Astrocyte of the cerebellum (primary cell): ENCODE measurements at regions of chr1 and their contacts with region 1.

Region 1: DNA sequence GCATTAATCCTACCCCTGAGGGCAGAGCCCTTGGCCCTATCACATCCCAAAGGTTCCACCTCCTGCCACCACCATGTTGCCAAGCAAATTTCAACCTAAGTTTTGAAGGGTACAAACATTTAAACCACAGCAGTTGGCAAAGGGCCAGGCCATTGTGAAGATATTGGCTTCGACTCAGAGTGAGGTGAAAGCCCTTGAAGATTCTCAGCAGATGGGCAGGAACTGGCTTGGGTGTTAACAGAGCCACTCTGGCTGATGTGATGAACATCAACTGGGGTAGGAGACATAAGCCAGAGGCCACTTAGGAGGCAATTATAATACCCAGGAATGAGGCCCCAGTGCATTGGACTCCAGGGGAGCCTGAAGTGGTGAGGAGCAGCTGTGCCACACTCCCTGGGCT is 207.7 kb upstream of the KAZN start:
- DNase-seq: no peak
- H3K4me3 ChIP-seq: no peak overlapping the region
- CTCF ChIP-seq: no peak

Region 2: GRCh38 chr1:14205066-14205465 is 185.8 kb before region 1 on chr1:
- in situ Hi-C with region 1: no loop called
- DNase-seq: no peak
- H3K4me3 ChIP-seq: no peak overlapping the region
- CTCF ChIP-seq: no peak

Region 3: DNA sequence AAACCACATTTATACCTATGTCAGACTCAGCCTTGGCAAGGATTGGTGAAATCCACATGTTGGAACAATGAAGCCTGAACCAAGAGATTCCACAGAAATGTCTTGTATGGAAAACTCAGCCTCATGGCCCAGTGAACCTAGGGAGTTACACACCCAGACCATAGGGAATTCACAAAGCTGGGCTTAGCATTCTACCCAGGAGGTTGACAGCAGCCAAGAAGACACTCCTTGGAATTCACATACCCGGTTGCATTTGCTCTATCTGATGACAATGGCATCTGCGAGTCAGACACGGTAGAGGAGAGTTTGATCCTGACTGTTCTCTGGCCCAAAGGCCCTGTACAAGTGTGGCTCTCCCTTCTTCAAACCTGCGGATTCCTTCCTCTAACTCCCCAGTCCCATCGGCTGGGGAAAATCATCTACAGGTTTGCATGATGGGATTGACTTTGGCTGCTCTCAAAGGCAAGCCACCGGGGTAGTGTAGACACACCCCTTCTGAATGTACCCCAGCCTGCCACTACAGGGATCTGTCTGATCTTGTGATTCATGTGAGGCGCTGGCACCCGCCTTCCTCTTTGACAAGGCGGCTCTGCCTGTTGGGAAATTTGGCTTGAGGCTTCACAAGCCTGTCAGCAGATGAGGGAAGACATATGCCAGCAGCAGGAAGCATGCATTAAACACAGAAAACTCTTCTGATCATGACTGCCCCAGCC is 89.7 kb before region 1 on chr1:
- in situ Hi-C with region 1: loop called (anchors 5 kb)
- DNase-seq: no peak
- H3K4me3 ChIP-seq: no peak overlapping the region
- CTCF ChIP-seq: no peak

Region 4: GRCh38 chr1:14479865-14480264 is 89.0 kb after region 1 on chr1:
- in situ Hi-C with region 1: loop called (anchors 5 kb)
- DNase-seq: no peak
- H3K4me3 ChIP-seq: no peak overlapping the region
- CTCF ChIP-seq: no peak

Region 5: GRCh38 chr1:14699620-14700019 is 308.8 kb after region 1 on chr1:
- in situ Hi-C with region 1: no loop called
- DNase-seq: no peak
- H3K4me3 ChIP-seq: no peak overlapping the region
- CTCF ChIP-seq: no peak